Naive thymus-derived CD4-positive, alpha-beta T cell (primary cell): ENCODE measurements at regions of chr1 and their contacts with region 1.

Region 1: DNA sequence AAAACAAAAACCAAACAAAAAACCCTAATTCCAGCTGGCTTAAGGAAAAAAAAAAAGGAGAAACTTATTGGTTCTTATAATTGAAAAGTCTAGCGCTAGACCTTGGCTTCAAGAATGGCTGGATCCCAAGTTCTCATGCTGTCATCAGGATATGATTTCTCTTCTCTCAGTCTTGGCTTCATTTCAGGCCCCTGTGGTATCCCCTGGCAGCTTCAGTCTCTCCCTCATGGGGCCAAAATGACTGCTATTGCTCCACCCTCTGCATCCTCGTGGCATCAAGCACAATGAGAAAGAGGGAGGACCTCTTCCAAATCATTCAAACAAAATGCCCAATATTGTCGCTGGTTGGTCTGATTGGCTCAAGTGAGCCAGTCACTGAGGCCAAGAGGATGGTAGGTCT is 80.7 kb downstream of the GIPC2 start:
- DNase-seq: no peak
- ATAC-seq: no peak
- H3K4me3 ChIP-seq: no peak overlapping the region
- H3K4me3 Mint-ChIP-seq: no peak overlapping the region
- H3K27ac ChIP-seq: no peak overlapping the region
- H3K27ac Mint-ChIP-seq: no peak overlapping the region
- H3K4me1 ChIP-seq: no peaks in the 10 kb centered on the region
- H3K4me1 Mint-ChIP-seq: no peaks in the 10 kb centered on the region
- H3K27me3 ChIP-seq: no peaks in the 10 kb centered on the region
- H3K27me3 Mint-ChIP-seq: peaks cover 0 to 6% (median 0%) of the 10 kb centered on the region in 5 donors

Region 2: DNA sequence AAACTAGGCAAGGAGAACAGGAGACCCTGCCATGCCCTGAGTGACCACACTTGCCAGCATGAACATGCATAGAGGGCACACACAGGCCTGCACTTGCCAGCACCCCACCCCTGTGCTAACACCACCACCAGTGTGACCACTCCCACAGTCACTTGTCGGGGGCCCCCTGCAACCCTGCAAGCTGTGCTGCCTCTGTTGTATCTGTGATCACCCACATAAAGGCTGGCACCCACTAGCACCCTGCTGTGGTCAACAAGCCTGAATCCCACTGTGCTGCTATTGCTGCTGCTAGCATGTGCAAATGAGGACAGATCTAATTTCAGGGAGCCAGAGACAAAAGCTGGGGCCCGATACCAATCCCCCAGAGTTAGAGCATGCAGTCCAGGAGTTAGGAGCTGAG is 137.0 kb after region 1 on chr1:
- CTCF ChIA-PET with region 1: no interaction called
- POLR2A ChIA-PET with region 1: no interaction called
- intact Hi-C with region 1: no loop called
- DNase-seq: no peak
- ATAC-seq: peak; percentile 24
- H3K4me3 ChIP-seq: no peak overlapping the region
- H3K4me3 Mint-ChIP-seq: no peak overlapping the region
- H3K27ac ChIP-seq: no peak overlapping the region
- H3K27ac Mint-ChIP-seq: no peak overlapping the region
- H3K4me1 ChIP-seq: no peaks in the 10 kb centered on the region
- H3K4me1 Mint-ChIP-seq: no peaks in the 10 kb centered on the region
- H3K27me3 ChIP-seq: no peaks in the 10 kb centered on the region
- H3K27me3 Mint-ChIP-seq: peaks cover 0 to 10% (median 0%) of the 10 kb centered on the region in 5 donors

Region 3: GRCh38 chr1:78607334-78607927 is 480.9 kb after region 1 on chr1:
- CTCF ChIA-PET with region 1: interaction called, 3 read pairs
- POLR2A ChIA-PET with region 1: no interaction called
- intact Hi-C with region 1: loop called (anchors 1 kb)
- DNase-seq: no peak
- ATAC-seq: no peak
- H3K4me3 ChIP-seq: no peak overlapping the region
- H3K4me3 Mint-ChIP-seq: peak overlapping the region in 1 of 10 donors; percentile 48
- H3K27ac ChIP-seq: no peak overlapping the region
- H3K27ac Mint-ChIP-seq: peak overlapping the region in 2 of 9 donors; percentile 50 to 59
- H3K4me1 ChIP-seq: peaks cover 0 to 6% of the 10 kb centered on the region in 2 donors
- H3K4me1 Mint-ChIP-seq: peaks cover 0 to 11% (median 0%) of the 10 kb centered on the region in 7 donors
- H3K27me3 ChIP-seq: no peaks in the 10 kb centered on the region
- H3K27me3 Mint-ChIP-seq: peaks cover 0 to 34% (median 0%) of the 10 kb centered on the region in 5 donors

Region 4: DNA sequence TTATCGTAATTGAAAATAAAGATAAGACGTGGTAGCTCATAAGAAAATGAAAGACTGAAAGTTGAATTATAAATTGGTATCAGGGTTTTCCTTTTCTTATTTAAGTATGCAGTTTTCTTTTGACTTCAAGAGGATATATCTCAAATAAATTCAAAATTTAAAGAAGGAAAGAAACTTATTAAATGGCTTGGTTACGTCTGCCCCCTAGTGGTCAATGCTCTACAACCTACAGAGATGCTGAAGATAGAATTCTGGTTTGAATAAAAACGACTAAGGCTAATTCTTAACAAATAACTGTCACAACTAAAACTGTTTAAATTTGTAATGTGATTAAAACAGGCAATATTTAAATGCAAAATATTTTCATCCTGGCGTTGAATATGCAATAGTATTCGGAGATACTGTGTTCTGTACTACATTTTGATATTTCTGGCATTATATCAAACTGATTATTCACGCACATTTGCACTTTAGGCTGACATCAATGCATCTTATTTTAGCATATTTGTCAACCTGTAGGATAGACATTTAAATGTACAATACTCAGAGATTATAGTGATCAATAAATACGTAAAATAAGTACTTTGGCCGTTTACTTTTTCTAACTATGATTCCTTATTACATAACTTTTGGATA is 550.0 kb after region 1 on chr1:
- CTCF ChIA-PET with region 1: interaction called, 4 read pairs
- POLR2A ChIA-PET with region 1: no interaction called
- intact Hi-C with region 1: loop called (anchors 1 kb)
- DNase-seq: peak in 7 of 9 donors; percentile 38 to 72 (median 62)
- ATAC-seq: peak; percentile 67
- H3K4me3 ChIP-seq: no peak overlapping the region
- H3K4me3 Mint-ChIP-seq: no peak overlapping the region
- H3K27ac ChIP-seq: no peak overlapping the region
- H3K27ac Mint-ChIP-seq: no peak overlapping the region
- H3K4me1 ChIP-seq: no peaks in the 10 kb centered on the region
- H3K4me1 Mint-ChIP-seq: peaks cover 3 to 33% (median 6%) of the 10 kb centered on the region in 7 donors
- H3K27me3 ChIP-seq: no peaks in the 10 kb centered on the region
- H3K27me3 Mint-ChIP-seq: peaks cover 0 to 6% (median 0%) of the 10 kb centered on the region in 5 donors